Esophagus muscularis mucosa (tissue), 4 donors: ENCODE measurements at regions of chr11 and their contacts with region 1.

Region 1: DNA sequence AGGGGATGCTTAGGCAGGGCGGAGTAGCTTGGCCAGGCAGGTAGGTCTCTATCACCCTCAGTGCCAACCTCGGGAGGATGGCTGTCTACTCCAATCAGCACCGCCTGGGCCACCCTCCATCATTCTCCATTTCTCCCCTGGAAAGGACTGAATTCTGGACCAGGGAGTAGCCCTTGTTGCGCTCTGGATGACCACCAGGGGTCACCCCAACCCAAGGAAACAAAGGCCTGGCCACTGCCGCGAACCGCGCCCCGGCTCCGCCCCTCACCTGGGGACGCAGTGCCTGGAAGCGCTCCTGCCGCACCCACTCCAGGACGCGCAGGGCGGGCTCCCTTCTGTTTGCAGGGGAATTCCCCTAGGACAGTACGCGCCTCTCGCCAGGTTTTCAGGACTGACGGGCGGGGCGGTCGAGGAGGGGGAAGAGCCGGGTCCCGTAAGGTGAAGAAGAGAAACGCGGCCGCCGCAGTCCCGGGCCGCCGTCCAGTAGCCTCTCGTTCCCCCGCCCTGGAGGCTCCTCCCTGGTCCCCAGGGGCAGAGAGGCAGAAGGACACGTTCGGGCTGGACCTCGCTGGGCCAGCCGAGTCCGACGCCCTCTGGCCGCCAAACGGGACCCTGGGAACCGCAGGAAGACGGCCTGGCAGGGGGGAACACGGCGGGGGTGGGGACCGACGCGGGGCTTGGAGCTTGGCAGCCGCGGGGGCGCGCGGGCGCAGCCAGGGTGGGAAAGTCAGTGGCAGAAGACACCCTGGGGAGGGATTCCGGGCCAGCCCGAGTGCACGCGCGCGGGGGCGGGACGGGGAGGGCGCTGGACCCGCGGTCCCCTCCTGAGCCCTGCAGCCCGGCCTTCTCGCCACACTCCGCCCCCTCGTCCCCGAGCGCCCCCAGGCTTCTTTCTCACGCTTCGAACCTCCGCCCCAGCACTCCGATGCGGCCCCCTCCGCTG is 7.1 kb downstream of the SCN4B start:
- DNase-seq: peak; percentile 94
- H3K4me3 ChIP-seq: peak overlapping the region; percentile 55 to 84 (median 66)
- H3K27ac ChIP-seq: peak overlapping the region in 3 of 4 donors; percentile 44 to 63 (median 60)
- H3K4me1 ChIP-seq: peaks cover 14 to 17% (median 16%) of the 10 kb centered on the region in 4 donors
- H3K27me3 ChIP-seq: peaks cover 0 to 41% (median 4%) of the 10 kb centered on the region in 4 donors
- CTCF ChIP-seq: peak; percentile 89 to 93 (median 93)
- EP300 ChIP-seq: no peak
- POLR2A ChIP-seq: no peak

Region 2: DNA sequence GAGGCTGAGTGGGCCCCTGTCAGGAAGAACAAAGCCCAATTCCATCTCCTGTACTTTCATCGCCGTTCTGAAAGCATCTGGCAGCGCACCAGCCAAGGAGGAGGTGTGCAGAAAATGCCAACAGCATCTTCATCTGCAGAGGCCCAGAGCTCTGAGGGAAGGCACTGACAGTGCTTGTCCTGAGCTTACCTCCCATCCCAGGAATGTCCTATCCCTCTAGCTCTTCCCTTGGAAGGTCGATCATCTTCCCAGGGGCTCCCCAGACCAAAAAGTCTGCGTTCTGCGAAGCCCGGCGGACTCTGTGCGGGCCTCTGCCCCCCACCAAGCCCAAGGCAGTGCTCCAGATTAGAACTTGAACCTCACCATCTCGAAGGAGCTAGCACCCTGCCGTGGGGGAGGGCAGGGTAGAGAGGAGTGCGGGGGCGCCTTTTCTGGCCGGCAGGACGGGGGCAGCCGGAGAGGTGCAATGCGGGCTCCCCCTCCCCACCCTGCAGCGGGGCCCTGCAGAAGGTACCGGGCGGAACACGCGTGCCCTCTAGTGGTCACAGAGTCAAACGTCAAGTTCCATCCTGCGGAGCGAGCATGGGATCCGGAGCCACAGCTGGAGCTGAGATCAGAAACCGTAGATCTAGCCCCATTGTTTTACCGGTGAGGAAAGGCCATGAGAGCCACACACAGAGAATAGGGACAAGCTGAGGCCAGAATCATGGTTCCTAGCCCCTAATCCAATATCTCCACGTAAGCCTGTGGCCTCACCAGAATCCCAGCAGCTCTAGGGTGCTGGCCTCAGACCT is 25.9 kb after region 1 on chr11:
- intact Hi-C with region 1: loop called (anchors 2 kb)
- DNase-seq: no peak
- H3K4me3 ChIP-seq: peak overlapping the region in 2 of 4 donors; percentile 3 to 27
- H3K27ac ChIP-seq: no peak overlapping the region
- H3K4me1 ChIP-seq: peaks cover 25 to 42% (median 33%) of the 10 kb centered on the region in 4 donors
- H3K27me3 ChIP-seq: peaks cover 0 to 16% (median 0%) of the 10 kb centered on the region in 4 donors
- CTCF ChIP-seq: peak; percentile 82 to 92 (median 91)
- EP300 ChIP-seq: no peak
- POLR2A ChIP-seq: no peak

Region 3: GRCh38 chr11:118353084-118353710 is 207.6 kb after region 1 on chr11:
- intact Hi-C with region 1: loop called (anchors 2 kb)
- DNase-seq: no peak
- H3K4me3 ChIP-seq: no peak overlapping the region
- H3K27ac ChIP-seq: no peak overlapping the region
- H3K4me1 ChIP-seq: no peaks in the 10 kb centered on the region
- H3K27me3 ChIP-seq: peaks cover 0 to 29% (median 0%) of the 10 kb centered on the region in 4 donors
- CTCF ChIP-seq: peak; percentile 45 to 57 (median 50)
- EP300 ChIP-seq: no peak
- POLR2A ChIP-seq: no peak